Activated naive CD4-positive, alpha-beta T cell treated with anti-CD3 and anti-CD28 coated beads for 36 hours (primary cell): ENCODE measurements at regions of chr3 and their contacts with region 1.

Region 1: DNA sequence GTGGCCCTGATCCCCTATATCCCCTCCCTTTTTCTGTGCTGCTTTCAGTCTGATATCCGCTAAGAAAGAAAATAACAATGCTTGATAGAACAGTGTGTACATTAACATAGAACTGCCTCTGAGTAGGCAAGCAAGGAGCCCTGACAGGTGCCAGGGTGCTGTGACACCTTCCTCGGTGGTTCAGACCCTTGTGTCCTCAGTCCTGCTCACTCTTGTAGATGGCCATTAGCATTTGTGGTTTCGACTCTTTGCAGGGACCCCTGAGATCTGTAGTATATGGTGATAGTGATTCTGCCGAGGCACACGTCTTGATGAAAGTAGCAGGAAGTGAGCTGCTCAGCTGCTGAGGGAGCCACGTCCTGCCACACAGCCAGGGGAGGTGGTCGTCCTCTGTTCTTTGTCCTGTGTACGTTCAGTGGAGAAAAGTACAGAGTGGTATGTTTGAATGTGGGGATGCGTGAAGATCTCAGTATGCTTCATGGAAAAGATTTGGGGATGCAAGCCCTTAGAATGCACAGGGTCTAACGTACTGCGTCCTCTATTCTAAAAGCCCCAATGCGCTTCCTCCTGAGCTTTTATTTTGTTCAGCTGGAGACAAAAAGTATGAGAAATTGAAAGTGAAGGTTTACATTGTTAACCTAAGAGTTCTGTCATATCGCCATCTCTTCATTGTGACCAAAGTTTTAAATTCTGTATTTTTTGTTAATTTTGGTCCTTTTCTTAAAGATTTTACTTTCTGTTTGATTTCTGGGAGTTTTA is 35.4 kb downstream of the PXYLP1 start:
- DNase-seq: peak; percentile 52
- H3K4me3 Mint-ChIP-seq: peak overlapping the region; percentile 78
- H3K27ac Mint-ChIP-seq: peak overlapping the region; percentile 86
- H3K4me1 Mint-ChIP-seq: peaks cover 35% of the 10 kb centered on the region
- H3K27me3 Mint-ChIP-seq: no peaks in the 10 kb centered on the region

Region 2: GRCh38 chr3:140941434-140942220 is 325.3 kb before region 1 on chr3 and contains the start of gene SLC25A36:
- CTCF ChIA-PET with region 1: no interaction called
- intact Hi-C with region 1: loop called (anchors 1 kb)
- DNase-seq: peak; percentile 99
- H3K4me3 Mint-ChIP-seq: peak within 1 kb of the TSS; percentile 89
- H3K27ac Mint-ChIP-seq: peak within 1 kb of the TSS; percentile 88
- H3K4me1 Mint-ChIP-seq: peaks cover 35% of the 10 kb centered on the region
- H3K27me3 Mint-ChIP-seq: no peaks in the 10 kb centered on the region
- total RNA-seq, gene SLC25A36: 48.7 to 50.1 TPM

Region 3: DNA sequence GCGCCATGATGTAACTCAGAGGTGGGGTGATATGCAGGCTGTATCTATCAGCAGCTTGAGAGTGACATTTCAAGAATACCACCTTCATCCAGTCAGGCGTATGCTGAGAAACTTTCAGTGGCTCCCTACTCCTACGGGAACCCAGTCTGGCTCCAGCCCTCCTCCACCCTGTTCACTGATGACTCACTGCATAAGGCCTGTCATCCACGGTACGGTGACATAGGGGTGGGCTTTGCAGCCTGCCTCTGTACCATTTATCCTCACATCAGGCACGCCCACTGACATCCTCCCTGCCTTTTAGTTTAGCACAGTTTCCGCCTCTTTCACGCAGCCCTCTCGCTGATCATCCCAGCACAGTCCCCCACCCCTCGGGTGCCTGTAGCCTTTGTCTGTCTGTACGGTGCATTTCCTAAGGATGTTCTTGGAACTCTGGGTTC is 23.7 kb before region 1 on chr3:
- CTCF ChIA-PET with region 1: interaction called, 3 read pairs
- intact Hi-C with region 1: loop called (anchors 1 kb)
- DNase-seq: peak; percentile 86
- H3K4me3 Mint-ChIP-seq: peak overlapping the region; percentile 61
- H3K27ac Mint-ChIP-seq: peak overlapping the region; percentile 59
- H3K4me1 Mint-ChIP-seq: peaks cover 45% of the 10 kb centered on the region
- H3K27me3 Mint-ChIP-seq: no peaks in the 10 kb centered on the region

Region 4: DNA sequence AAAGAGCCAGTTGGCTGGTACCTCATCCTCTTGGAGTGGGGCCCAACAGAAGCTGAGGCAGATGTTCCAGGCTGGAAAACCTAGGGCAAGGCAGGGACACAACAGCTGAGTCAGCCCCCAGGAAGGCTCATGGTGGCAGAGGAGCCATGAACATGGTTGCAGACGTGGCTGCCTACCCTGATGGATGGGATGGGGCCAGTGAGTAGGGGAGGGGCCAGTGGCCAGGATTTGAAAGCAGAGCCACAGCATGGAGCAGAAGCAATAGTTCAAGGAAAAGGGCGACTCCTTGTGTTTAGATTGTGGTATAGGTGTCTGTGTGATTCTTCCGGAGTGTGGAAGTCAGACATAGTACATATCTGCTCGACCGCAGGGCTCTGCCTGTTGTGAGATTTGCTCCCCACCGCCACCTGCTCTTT is 11.1 kb before region 1 on chr3:
- CTCF ChIA-PET with region 1: interaction called, 12 read pairs
- intact Hi-C with region 1: no loop called
- DNase-seq: peak; percentile 68
- H3K4me3 Mint-ChIP-seq: peak overlapping the region; percentile 3
- H3K27ac Mint-ChIP-seq: no peak overlapping the region
- H3K4me1 Mint-ChIP-seq: peaks cover 25% of the 10 kb centered on the region
- H3K27me3 Mint-ChIP-seq: no peaks in the 10 kb centered on the region

Region 5: DNA sequence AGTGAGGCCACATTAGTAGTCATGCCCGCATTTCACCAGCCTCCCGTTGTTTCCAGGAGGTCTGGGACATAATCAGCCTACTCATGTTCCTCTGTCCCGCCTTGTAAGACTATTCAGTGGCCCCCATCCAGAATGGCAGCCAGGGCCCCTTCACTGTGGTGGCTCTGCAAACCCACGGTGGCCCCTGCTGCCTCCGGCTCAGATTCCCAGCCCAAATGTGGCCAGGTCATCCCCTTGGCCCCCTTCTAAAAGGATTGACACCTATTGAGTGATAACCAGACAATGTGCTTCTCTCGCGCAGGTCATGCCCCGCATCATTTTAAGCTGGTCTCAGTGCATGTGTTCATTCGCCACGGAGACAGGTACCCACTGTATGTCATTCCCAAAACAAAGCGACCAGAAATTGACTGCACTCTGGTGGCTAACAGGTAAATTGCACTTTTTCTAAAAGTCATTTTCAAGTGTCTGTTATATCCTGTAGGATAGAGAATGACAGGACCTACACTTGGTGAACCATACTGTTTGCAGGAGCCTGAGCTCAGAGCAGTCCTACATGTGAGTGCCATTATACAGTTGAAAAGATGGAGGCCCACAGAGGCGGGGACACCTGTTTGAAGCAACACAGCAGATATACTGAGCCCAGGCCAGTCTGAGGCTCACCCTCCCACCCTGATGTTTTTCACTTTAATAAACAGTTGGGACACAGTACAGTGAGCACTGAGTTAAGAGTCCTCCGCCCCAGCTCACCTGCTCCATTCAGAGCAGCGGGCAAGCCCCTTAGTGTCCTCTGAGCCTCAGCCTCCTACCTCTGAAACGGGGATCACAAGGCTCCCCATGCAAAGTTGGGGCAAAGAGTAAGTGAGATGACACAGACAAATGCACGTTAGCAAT is 12.3 kb after region 1 on chr3:
- CTCF ChIA-PET with region 1: interaction called, 9 read pairs
- intact Hi-C with region 1: loop called (anchors 1 kb)
- DNase-seq: peak; percentile 34
- H3K4me3 Mint-ChIP-seq: no peak overlapping the region
- H3K27ac Mint-ChIP-seq: no peak overlapping the region
- H3K4me1 Mint-ChIP-seq: peaks cover 17% of the 10 kb centered on the region
- H3K27me3 Mint-ChIP-seq: no peaks in the 10 kb centered on the region

Region 6: GRCh38 chr3:141303481-141304223 is 36.7 kb after region 1 on chr3:
- CTCF ChIA-PET with region 1: interaction called, 4 read pairs
- intact Hi-C with region 1: loop called (anchors 2 kb)
- DNase-seq: peak; percentile 85
- H3K4me3 Mint-ChIP-seq: no peak overlapping the region
- H3K27ac Mint-ChIP-seq: no peak overlapping the region
- H3K4me1 Mint-ChIP-seq: peaks cover 55% of the 10 kb centered on the region
- H3K27me3 Mint-ChIP-seq: no peaks in the 10 kb centered on the region

Region 7: DNA sequence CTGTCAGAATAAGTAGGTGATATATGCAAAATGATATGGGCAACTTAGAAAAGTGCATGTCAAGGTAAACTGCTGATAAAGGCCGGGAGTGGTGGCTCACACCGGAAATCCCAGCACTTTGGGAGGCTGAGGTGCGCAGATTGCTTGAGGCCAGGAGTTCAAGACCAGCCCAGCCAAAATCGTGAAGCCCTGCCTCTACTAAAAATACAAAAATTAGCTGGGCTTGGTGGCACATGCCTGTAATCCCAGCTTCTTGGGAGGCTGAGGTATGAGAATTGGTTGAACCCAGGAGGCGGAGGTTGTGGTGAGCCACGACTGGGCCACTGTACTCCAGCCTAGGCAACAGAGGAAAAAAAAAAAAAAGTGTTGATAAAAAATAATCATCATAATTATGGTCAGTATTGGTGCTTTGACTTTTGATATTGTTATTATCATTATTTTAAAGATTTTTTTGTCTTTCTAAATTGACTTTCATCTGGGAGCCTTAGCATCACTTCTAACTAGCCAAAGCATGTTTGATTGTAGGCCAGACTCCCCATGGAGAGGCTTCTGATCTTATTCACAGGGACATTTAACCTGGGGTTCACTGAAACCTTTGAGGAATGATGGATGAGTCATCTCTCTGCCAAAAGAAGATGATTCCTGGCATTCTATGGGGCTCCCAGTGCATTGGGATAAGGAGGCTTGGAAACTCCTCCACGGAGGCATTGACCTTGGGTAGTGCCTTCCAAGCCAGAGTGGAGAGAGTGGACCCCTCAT is 107.0 kb after region 1 on chr3:
- CTCF ChIA-PET with region 1: no interaction called
- intact Hi-C with region 1: no loop called
- DNase-seq: no peak
- H3K4me3 Mint-ChIP-seq: no peak overlapping the region
- H3K27ac Mint-ChIP-seq: peak overlapping the region; percentile 56
- H3K4me1 Mint-ChIP-seq: peaks cover 31% of the 10 kb centered on the region
- H3K27me3 Mint-ChIP-seq: no peaks in the 10 kb centered on the region